ENCODE measurements at regions of chr14 and their contacts with region 1.

Region 1: DNA sequence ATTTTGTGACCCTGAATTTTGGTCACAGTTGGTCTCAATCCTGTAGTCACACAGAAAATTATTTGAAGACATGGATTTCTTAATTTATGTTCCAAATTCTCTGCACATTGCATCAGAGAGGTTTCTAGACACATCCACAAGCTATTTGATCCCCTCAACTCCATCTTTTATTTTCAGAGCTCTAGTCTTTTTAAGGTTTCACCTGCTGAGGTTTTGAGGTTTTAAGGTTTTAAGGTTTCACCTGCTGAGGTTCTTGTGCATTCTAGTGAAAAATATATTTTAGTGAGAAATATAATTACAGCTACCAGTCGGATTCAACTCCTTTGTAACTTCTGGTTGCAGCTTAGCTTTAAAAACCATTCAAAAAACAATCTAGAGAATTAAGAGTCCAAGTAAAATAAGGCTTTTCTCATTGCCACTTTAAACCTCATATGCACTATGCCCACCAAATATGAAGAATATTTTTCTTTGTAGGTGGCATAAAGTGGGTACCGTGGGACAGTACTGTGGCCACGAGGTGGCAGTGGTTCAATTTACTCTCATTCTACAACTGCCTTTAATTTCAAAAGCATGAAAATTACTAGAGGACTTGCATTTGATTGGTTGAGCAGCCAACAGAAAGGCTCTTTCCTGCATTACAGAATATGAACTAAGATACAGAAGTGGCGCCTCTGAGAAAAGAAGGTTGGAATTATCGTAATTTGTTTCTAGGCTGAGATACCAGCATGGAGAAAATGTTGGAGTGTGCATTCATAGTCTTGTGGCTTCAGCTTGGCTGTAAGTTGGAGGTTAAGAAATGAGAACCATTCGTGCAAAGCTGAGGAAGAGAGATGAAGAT is 366.5 kb upstream of the OR4E1 start:
- DNase-seq: peak in 32 of 35 experiments; percentile 16 to 67 (median 40)
- ATAC-seq: peak; percentile 89 to 97 (median 91)
- H3K4me3 ChIP-seq: peak overlapping the region; percentile 24 to 38
- H3K4me3 Mint-ChIP-seq: peak overlapping the region; percentile 68 to 82 (median 72)
- H3K27ac ChIP-seq: peak overlapping the region; percentile 23
- H3K27ac Mint-ChIP-seq: peak overlapping the region; percentile 80 to 86
- H3K4me1 ChIP-seq: peaks cover 3 to 7% of the 10 kb centered on the region in 2 experiments
- H3K4me1 Mint-ChIP-seq: peaks cover 9 to 20% (median 16%) of the 10 kb centered on the region in 3 donors
- H3K27me3 ChIP-seq: no peaks in the 10 kb centered on the region
- H3K27me3 Mint-ChIP-seq: no peaks in the 10 kb centered on the region

Region 2: DNA sequence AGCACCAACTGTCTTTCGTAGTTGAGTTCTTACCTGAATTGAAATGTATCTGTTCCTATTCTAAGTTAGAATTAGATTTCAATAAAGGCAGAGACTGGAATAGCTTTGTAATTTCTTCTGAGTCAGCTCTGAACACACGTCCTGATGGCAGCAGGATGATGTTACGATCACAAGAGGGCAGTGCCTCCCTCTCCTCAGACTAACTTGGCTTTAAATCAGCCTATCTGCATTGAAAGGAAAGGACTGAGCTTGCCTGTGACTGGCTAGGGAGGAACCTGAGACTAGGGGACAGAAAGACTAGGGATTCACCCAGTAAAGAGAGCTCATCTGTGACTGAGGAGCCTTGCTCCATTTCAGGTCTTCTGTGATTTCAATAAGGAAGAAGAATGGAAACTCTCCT is 42.9 kb before region 1 on chr14:
- CTCF ChIA-PET with region 1: interaction called, 3 to 10 read pairs
- POLR2A ChIA-PET with region 1: no interaction called
- DNase-seq: peak in 24 of 35 experiments; percentile 5 to 70 (median 26)
- ATAC-seq: peak; percentile 85 to 94 (median 90)
- H3K4me3 ChIP-seq: peak overlapping the region; percentile 38 to 48
- H3K4me3 Mint-ChIP-seq: peak overlapping the region; percentile 87 to 90 (median 88)
- H3K27ac ChIP-seq: peak overlapping the region; percentile 38
- H3K27ac Mint-ChIP-seq: peak overlapping the region; percentile 92 to 96
- H3K4me1 ChIP-seq: peaks cover 0 to 6% of the 10 kb centered on the region in 2 experiments
- H3K4me1 Mint-ChIP-seq: peaks cover 4 to 30% (median 13%) of the 10 kb centered on the region in 3 donors
- H3K27me3 ChIP-seq: no peaks in the 10 kb centered on the region
- H3K27me3 Mint-ChIP-seq: peaks cover 0 to 1% of the 10 kb centered on the region in 2 donors

Region 3: GRCh38 chr14:22081337-22081736 is 41.2 kb after region 1 on chr14:
- CTCF ChIA-PET with region 1: no interaction called
- POLR2A ChIA-PET with region 1: no interaction called
- DNase-seq: peak in 1 of 35 experiments; percentile 39
- ATAC-seq: peak; percentile 45 to 84 (median 72)
- H3K4me3 ChIP-seq: no peak overlapping the region
- H3K4me3 Mint-ChIP-seq: peak overlapping the region; percentile 2 to 59 (median 51)
- H3K27ac ChIP-seq: no peak overlapping the region
- H3K27ac Mint-ChIP-seq: peak overlapping the region; percentile 76 to 83
- H3K4me1 ChIP-seq: peaks cover 11 to 15% of the 10 kb centered on the region in 2 experiments
- H3K4me1 Mint-ChIP-seq: peaks cover 30 to 35% (median 34%) of the 10 kb centered on the region in 3 donors
- H3K27me3 ChIP-seq: no peaks in the 10 kb centered on the region
- H3K27me3 Mint-ChIP-seq: no peaks in the 10 kb centered on the region

Measured in T-cell (primary cell).